Activated T-helper 1 cell treated with anti-CD3 and anti-CD28 coated beads, Interleukin-12 subunit alpha, Interleukin-12 subunit beta, Interleukin-2, Interleukin-4 antibody, amounts not matched to agents 30 ng/mL and 10 ng/mL and 1 ng/mL, durations not matched to agents 14 hours and 24 hours and 36 hours (primary cell): ENCODE measurements at regions of chr15 and their contacts with region 1.

Region 1: DNA sequence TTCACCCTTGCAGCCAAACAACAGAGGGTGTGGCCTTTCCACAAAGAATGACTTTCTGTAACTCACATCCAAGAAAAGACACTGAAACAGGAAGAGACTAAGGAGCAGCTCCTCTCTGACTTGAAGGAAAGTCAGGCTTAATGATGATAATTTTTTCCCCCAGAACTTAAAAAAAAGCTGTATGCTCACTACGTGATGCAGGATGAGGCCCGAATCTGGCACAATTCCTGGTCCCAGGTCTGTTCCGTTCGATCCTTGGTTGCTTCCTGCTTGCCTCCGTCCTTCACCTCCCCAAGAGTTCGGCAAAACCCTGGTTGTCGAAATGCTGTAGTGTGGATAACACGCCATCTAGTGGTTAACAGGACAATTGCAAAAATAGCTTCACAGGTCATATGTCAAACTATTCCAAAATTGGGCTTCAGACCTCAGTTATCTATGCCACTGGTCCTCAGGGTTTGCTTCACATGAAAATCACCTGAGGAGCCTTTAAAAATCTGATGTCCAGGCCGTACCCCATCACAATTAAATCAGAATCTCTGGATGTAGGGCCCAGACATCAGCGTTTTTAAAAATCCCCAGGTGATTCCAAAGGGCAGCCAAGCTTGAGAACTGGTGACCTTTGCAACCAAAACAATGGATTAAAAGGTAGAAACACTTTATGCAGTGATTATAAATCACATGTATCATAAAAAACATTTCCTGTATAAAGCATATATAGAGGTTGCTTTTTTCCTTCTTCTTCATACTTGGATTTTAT is 28.1 kb upstream of the SYNM start:
- DNase-seq: peak; percentile 31
- H3K4me3 Mint-ChIP-seq: peak overlapping the region; percentile 77
- H3K27ac Mint-ChIP-seq: no peak overlapping the region
- H3K4me1 Mint-ChIP-seq: peaks cover 7% of the 10 kb centered on the region
- H3K27me3 Mint-ChIP-seq: peaks cover 11% of the 10 kb centered on the region

Region 2: GRCh38 chr15:98442379-98442833 is 634.3 kb before region 1 on chr15:
- intact Hi-C with region 1: loop called (anchors 1 kb)
- DNase-seq: peak; percentile 34
- H3K4me3 Mint-ChIP-seq: no peak overlapping the region
- H3K27ac Mint-ChIP-seq: no peak overlapping the region
- H3K4me1 Mint-ChIP-seq: peaks cover 5% of the 10 kb centered on the region
- H3K27me3 Mint-ChIP-seq: peaks cover 5% of the 10 kb centered on the region

Region 3: DNA sequence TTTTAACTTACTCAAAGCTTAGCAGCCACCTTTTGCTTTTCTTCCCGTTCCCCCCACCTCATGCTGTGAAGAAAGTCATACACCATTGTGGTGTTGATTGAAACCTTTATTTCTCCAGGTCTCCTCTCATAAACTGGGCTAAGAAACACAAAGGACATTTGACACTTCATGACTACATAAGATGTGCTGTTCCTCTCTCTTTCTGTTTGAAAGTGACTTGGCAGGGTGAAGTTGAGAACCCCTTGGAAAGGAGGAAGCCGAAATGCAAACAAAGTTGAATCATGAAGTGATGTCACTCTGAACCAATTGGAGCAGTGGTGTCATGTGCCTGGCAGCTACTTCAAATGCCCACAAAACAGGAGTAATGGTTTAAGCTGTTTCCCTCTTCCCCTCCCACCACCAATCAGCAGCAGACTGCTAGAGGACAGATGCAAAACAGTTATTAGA is 253.7 kb before region 1 on chr15:
- intact Hi-C with region 1: no loop called
- DNase-seq: no peak
- H3K4me3 Mint-ChIP-seq: no peak overlapping the region
- H3K27ac Mint-ChIP-seq: no peak overlapping the region
- H3K4me1 Mint-ChIP-seq: no peaks in the 10 kb centered on the region
- H3K27me3 Mint-ChIP-seq: no peaks in the 10 kb centered on the region

Region 4: GRCh38 chr15:99014803-99015676 is 61.7 kb before region 1 on chr15:
- intact Hi-C with region 1: loop called (anchors 5 kb)
- DNase-seq: peak; percentile 60
- H3K4me3 Mint-ChIP-seq: peak overlapping the region; percentile 74
- H3K27ac Mint-ChIP-seq: peak overlapping the region; percentile 78
- H3K4me1 Mint-ChIP-seq: no peaks in the 10 kb centered on the region
- H3K27me3 Mint-ChIP-seq: peaks cover 38% of the 10 kb centered on the region

Region 5: GRCh38 chr15:99059010-99059981 is 17.4 kb before region 1 on chr15:
- intact Hi-C with region 1: loop called (anchors 1 kb)
- DNase-seq: peak; percentile 48
- H3K4me3 Mint-ChIP-seq: peak overlapping the region; percentile 70
- H3K27ac Mint-ChIP-seq: no peak overlapping the region
- H3K4me1 Mint-ChIP-seq: peaks cover 8% of the 10 kb centered on the region
- H3K27me3 Mint-ChIP-seq: peaks cover 29% of the 10 kb centered on the region